ENCODE measurements at regions of chr6 and their contacts with region 1.

Region 1: DNA sequence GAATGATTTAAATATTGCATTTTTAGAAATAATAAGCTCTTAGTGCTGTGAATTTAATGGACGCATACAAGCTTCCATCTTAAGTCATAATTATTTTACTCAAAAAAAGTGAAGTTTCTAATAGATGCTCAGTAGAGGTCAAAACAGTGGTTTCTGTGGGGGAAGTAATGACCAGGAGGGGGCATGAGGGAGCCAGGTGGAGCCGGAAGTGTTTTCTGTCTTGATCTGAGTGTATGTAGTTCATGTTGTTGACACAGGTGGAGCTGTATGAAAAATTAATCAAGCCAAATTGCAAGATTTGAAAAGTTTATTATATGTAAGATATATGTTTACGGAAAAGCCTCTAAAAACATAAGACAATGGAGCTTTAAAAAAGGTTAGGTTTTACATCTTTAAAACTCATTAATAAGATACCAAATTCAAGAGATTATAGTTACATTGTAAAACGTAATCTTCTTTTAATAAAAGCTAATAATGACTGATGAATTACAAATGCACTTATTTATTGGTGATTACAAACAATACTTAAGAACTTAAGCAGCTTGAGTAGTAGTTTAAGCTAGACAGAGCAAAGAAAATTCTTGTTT is 68.0 kb downstream of the PLAGL1 start:
- DNase-seq: peak; percentile 80
- CTCF ChIP-seq: peak; percentile 71

Region 2: GRCh38 chr6:142810952-142811514 is 1129.1 kb before region 1 on chr6:
- in situ Hi-C with region 1: no loop called
- DNase-seq: no peak
- CTCF ChIP-seq: no peak

Region 3: GRCh38 chr6:143241111-143241510 is 699.0 kb before region 1 on chr6:
- in situ Hi-C with region 1: no loop called
- DNase-seq: no peak
- CTCF ChIP-seq: no peak

Region 4: GRCh38 chr6:143457563-143458359 is 482.3 kb before region 1 on chr6:
- in situ Hi-C with region 1: no loop called
- DNase-seq: no peak
- CTCF ChIP-seq: no peak

Region 5: DNA sequence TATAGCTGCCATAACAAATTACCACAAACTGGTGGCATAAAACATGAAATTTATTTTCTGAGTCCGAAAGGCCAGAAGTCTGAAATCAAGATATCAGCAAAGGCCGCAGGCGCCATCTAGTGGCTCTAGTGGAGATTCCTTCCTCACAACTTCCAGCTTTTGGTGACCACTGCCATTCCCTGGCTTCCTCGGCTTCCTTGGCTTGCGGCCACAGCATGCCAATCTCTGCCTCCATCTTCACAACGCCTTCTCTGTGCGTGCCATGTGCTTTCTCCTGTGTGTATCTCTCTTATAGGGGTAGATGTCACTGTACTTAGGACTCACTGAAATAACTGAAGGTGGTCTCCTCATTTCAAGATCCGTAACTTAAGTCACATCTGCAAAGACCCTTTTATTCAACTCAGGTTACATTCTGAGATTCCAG is 73.4 kb after region 1 on chr6:
- in situ Hi-C with region 1: loop called (anchors 10 kb)
- DNase-seq: peak; percentile 54
- CTCF ChIP-seq: peak; percentile 83

Region 6: DNA sequence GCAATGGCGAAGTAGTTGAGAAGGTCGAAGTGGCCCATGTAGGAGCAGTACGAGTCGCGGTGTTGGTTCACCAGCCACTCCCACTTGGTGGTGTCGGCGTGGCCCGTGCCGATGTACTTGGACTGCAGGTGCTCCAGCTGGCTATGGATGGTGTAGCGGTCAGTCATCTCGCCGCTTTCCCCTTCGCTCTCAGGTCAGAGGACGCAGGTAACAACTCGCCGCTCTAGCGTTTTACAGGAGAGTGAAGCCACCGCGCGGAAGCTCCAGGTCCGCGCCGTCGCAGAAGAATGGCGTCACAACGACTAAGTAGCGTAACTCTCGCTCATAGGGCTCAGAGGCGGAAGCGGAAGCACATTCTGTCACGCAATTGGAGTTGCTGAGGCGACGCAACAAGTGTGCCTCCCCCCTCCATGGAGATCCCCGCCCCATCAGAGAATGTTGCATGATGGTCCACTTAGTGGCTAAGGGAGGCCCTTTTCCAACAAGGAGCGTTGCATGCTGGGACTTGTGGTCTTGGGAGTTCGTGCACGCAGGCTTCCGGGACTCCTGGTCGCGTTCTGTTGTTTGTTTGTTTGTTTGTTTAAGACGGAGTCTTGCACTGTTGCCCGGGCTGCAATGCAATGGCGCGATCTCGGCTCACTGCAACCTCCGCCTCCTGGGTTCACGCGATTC is 155.4 kb after region 1 on chr6 and contains the start of gene SF3B5:
- in situ Hi-C with region 1: loop called (anchors 10 kb)
- DNase-seq: peak; percentile 87
- CTCF ChIP-seq: no peak